ENCODE measurements at regions of chr1 and their contacts with region 1.

Region 1: DNA sequence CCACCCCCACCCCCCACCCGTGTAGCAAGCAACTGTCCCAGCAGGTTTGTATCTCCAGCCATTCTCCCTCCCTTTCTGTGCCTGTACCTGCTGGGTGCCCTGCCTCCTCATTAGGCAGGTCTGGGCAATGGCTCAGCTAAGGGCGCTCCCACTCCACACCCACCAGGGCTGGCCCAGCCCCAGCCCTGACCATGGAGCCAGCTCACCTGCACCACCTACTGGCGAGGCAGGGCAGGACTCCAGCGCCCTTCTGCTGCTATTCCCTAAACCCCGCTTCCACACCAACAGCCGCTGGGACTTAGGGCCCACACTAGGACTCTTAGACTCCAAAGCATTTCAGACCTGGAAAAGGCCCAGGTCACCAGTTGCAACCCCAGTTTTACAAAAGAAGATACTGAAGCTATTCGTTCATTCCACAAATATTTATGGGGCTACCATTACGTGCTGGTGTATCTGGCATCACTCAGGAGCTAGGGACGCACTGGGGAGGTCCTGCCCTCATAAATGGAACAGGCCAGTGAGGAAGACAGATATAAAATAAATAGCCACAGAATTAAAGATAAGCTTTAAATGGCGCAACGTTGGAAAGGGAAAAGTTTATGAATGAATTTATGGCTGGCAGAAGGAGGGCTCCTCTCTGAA is 24.0 kb downstream of the PGLYRP3 start:
- DNase-seq: no peak
- ATAC-seq: peak; percentile 51
- H3K4me3 Mint-ChIP-seq: no peak overlapping the region
- H3K27ac Mint-ChIP-seq: no peak overlapping the region
- H3K4me1 Mint-ChIP-seq: peaks cover 11% of the 10 kb centered on the region
- H3K27me3 Mint-ChIP-seq: peaks cover 9% of the 10 kb centered on the region

Region 2: GRCh38 chr1:153277817-153278216 is 10.9 kb before region 1 on chr1:
- CTCF ChIA-PET with region 1: interaction called, 10 read pairs
- POLR2A ChIA-PET with region 1: no interaction called
- DNase-seq: peak; percentile 46
- ATAC-seq: peak; percentile 63
- H3K4me3 Mint-ChIP-seq: no peak overlapping the region
- H3K27ac Mint-ChIP-seq: no peak overlapping the region
- H3K4me1 Mint-ChIP-seq: no peaks in the 10 kb centered on the region
- H3K27me3 Mint-ChIP-seq: peaks cover 28% of the 10 kb centered on the region

Region 3: DNA sequence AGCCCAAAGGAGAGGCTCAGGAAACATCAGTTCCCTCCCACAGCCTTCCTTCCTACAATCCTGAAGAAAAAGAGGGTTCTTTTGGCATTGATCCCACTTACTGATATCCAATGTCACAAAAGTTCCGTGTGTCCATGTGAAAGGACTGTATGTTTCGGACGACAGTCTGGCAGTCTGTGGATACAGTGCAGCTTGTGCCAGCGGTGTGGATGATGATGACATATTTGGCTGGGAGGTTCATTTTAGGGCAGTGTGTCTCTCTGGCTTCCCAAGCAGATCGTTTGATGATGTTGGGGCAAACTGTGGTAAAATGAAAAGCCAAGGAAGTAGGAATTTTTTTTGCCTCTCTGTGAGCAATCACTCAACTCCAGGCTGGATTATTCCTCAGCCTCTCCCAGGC is 13.6 kb after region 1 on chr1:
- CTCF ChIA-PET with region 1: interaction called, 15 read pairs
- POLR2A ChIA-PET with region 1: no interaction called
- DNase-seq: no peak
- ATAC-seq: no peak
- H3K4me3 Mint-ChIP-seq: no peak overlapping the region
- H3K27ac Mint-ChIP-seq: no peak overlapping the region
- H3K4me1 Mint-ChIP-seq: no peaks in the 10 kb centered on the region
- H3K27me3 Mint-ChIP-seq: peaks cover 4% of the 10 kb centered on the region

Region 4: GRCh38 chr1:153415850-153416570 is 127.3 kb after region 1 on chr1 and contains the start of gene S100A7A:
- CTCF ChIA-PET with region 1: no interaction called
- POLR2A ChIA-PET with region 1: no interaction called
- DNase-seq: no peak
- ATAC-seq: no peak
- H3K4me3 Mint-ChIP-seq: no peak within 1 kb of the TSS
- H3K27ac Mint-ChIP-seq: no peak within 1 kb of the TSS
- H3K4me1 Mint-ChIP-seq: no peaks in the 10 kb centered on the region
- H3K27me3 Mint-ChIP-seq: no peaks in the 10 kb centered on the region
- total RNA-seq, gene S100A7A: not detected